HEK293 (cell line): ENCODE measurements at regions of chr4 and their contacts with region 1.

Region 1: GRCh38 chr4:101169044-101170014 is 178.0 kb downstream of the PPP3CA start:
- H3K4me3 ChIP-seq: no peak overlapping the region
- H3K27ac ChIP-seq: no peak overlapping the region
- H3K4me1 ChIP-seq: no peaks in the 10 kb centered on the region
- CTCF ChIP-seq: peak; percentile 35; the same call in 1 of the 2 replicates

Region 2: DNA sequence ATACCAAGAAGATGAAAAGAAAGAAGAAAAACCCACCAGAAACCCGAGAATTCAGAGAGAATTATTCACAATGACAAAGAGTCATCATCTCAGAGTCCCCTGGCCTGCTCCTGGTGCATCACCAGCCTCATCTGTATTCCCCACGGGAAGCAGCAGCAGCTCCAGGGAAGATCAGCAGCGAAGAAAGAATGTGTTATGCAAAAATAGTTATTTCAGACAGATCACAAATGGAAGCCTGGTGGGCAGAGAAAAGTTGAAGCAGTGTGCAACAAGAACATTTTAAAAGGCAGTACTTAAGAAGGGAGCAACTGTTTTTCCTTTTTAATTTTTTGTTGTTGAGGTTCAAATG is 11.2 kb before region 1 on chr4:
- CTCF ChIA-PET with region 1: interaction called, 10 read pairs
- POLR2A ChIA-PET with region 1: no interaction called
- H3K4me3 ChIP-seq: no peak overlapping the region
- H3K27ac ChIP-seq: no peak overlapping the region
- H3K4me1 ChIP-seq: no peaks in the 10 kb centered on the region
- CTCF ChIP-seq: no peak

Region 3: GRCh38 chr4:101730291-101731117 is 561.2 kb after region 1 on chr4:
- CTCF ChIA-PET with region 1: interaction called, 40 read pairs
- POLR2A ChIA-PET with region 1: no interaction called
- H3K4me3 ChIP-seq: no peak overlapping the region
- H3K27ac ChIP-seq: no peak overlapping the region
- H3K4me1 ChIP-seq: no peaks in the 10 kb centered on the region
- CTCF ChIP-seq: 0 out of 2 replicates have a peak, but pooled peaks have one; percentile 27